Ascending aorta (tissue), 2 donors: ENCODE measurements at regions of chr7 and their contacts with region 1.

Region 1: DNA sequence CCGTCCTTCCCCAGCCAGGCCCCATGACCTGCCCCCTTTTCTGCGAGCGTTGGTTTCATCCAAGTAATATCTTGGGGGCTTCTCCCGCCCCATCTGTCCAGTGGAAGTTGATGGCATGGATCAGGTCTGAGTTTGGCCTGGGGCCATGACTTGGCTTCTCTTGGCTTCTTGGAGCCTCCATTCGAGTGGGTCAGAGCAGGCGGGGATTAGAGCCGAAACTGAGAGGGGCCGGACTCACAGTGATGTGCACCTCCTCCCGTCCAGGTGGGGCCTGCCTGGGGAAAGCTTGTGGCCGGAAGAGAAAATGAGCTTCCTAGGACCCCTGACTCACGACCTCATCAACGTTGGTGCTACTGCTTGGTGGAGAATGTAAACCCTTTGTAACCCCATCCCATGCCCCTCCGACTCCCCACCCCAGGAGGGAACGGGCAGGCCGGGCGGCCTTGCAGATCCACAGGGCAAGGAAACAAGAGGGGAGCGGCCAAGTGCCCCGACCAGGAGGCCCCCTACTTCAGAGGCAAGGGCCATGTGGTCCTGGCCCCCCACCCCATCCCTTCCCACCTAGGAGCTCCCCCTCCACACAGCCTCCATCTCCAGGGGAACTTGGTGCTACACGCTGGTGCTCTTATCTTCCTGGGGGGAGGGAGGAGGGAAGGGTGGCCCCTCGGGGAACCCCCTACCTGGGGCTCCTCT is 15.1 kb upstream of the LIMK1 start:
- DNase-seq: peak in 1 of 2 donors; percentile 72
- H3K4me3 ChIP-seq: no peak overlapping the region
- H3K27ac ChIP-seq: peak overlapping the region; percentile 50 to 76
- H3K4me1 ChIP-seq: no peaks in the 10 kb centered on the region
- H3K27me3 ChIP-seq: no peaks in the 10 kb centered on the region
- CTCF ChIP-seq: no peak

Region 2: GRCh38 chr7:72425420-72425819 is 1643.1 kb before region 1 on chr7:
- intact Hi-C with region 1: no loop called
- DNase-seq: no peak
- H3K4me3 ChIP-seq: no peak overlapping the region
- H3K27ac ChIP-seq: no peak overlapping the region
- H3K4me1 ChIP-seq: no peaks in the 10 kb centered on the region
- H3K27me3 ChIP-seq: no peaks in the 10 kb centered on the region
- CTCF ChIP-seq: no peak

Region 3: DNA sequence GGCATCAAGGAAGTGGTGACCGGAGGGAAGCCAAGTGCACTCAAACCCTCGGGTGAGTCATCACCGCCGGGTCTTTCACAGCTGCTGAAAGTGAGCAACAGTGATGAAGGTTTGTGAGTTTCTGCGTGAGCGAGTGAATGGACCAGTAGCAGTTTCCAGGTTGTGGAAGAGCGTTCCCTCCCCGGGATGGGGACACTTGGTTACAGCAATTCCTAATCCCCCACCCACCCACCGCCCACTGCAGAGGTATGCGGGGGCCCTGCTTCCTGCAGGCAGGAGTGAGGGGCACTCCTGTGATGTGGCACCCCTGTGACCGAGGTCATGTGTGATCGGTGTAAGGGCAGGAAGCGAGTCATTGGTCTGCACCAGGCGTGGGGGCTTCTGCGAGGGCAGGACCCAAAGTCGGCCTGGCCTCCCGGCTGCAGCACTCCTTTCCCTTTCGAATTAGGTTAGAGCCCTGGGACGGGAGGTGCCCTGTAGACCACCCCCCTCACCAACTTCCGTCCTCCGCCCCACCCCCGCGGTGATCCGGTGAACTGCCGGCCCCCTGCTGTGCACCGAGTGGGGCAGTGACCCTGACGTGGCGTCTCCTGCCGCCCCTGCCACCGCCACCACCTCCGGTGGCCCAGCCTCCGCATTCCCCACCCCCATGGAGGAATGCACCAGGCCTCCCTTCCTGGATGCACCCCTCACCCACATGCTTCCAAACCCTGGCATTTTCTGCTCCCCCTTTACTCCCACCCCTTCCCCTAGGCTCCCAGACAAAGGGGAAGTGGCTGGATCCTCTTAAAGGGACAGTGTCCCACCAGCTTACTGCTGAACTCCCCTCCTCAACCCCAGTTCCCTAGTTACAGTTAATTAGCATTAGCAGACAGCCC is 25.9 kb after region 1 on chr7:
- intact Hi-C with region 1: loop called (anchors 2 kb)
- DNase-seq: peak; percentile 72 to 94
- H3K4me3 ChIP-seq: peak overlapping the region; percentile 42 to 66
- H3K27ac ChIP-seq: peak overlapping the region; percentile 79 to 80
- H3K4me1 ChIP-seq: peaks cover 9 to 22% of the 10 kb centered on the region in 2 donors
- H3K27me3 ChIP-seq: no peaks in the 10 kb centered on the region
- CTCF ChIP-seq: no peak

Region 4: GRCh38 chr7:74173866-74174605 is 105.5 kb after region 1 on chr7 and contains the start of gene EIF4H:
- intact Hi-C with region 1: loop called (anchors 2 kb)
- DNase-seq: peak; percentile 77 to 97
- H3K4me3 ChIP-seq: peak within 1 kb of the TSS; percentile 70 to 99
- H3K27ac ChIP-seq: peak within 1 kb of the TSS; percentile 87 to 90
- H3K4me1 ChIP-seq: peaks cover 17 to 46% of the 10 kb centered on the region in 2 donors
- H3K27me3 ChIP-seq: no peaks in the 10 kb centered on the region
- CTCF ChIP-seq: no peak
- total RNA-seq, gene EIF4H: 150 TPM

Region 5: GRCh38 chr7:74202841-74203556 is 134.5 kb after region 1 on chr7:
- intact Hi-C with region 1: loop called (anchors 2 kb)
- DNase-seq: no peak
- H3K4me3 ChIP-seq: no peak overlapping the region
- H3K27ac ChIP-seq: no peak overlapping the region
- H3K4me1 ChIP-seq: peaks cover 0 to 5% of the 10 kb centered on the region in 2 donors
- H3K27me3 ChIP-seq: no peaks in the 10 kb centered on the region
- CTCF ChIP-seq: peak; percentile 45 to 60 (median 54)